Ovary (tissue), 10 donors: ENCODE measurements at regions of chr10 and their contacts with region 1.

Region 1: DNA sequence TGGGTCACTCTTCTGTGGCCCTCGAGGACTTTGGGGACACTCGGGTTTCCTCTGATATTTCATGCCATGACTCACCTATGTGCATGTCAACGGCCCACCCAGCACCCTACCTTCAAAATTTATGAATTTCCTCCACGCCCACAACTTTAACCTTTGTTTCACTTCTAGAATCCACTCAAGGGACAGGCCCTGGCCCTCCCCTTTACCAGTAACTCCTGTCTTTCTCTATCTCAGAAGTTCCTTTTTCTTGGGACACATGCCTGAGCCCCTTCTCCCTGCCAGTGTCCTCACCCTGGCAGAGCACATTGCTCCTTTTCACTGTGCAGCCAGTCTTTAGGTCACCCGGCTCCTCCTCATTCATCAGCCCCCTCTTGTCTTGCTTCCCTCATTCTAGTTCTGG is 282.5 kb upstream of the KLF6 start:
- DNase-seq: no peak
- H3K4me3 ChIP-seq: no peak overlapping the region
- H3K27ac ChIP-seq: no peak overlapping the region
- H3K4me1 ChIP-seq: peaks cover 3% of the 10 kb centered on the region
- H3K27me3 ChIP-seq: no peaks in the 10 kb centered on the region
- CTCF ChIP-seq: no peak
- EP300 ChIP-seq: no peak
- POLR2A ChIP-seq: no peak

Region 2: GRCh38 chr10:3887885-3888476 is 179.6 kb before region 1 on chr10:
- intact Hi-C with region 1: loop called in 1 of 4 experiments (anchors 10 kb)
- DNase-seq: peak in 1 of 5 donors; percentile 32
- H3K4me3 ChIP-seq: no peak overlapping the region
- H3K27ac ChIP-seq: no peak overlapping the region
- H3K4me1 ChIP-seq: peaks cover 1% of the 10 kb centered on the region
- H3K27me3 ChIP-seq: no peaks in the 10 kb centered on the region
- CTCF ChIP-seq: no peak
- EP300 ChIP-seq: no peak
- POLR2A ChIP-seq: no peak